ENCODE measurements at regions of chr6 and their contacts with region 1.

Region 1: DNA sequence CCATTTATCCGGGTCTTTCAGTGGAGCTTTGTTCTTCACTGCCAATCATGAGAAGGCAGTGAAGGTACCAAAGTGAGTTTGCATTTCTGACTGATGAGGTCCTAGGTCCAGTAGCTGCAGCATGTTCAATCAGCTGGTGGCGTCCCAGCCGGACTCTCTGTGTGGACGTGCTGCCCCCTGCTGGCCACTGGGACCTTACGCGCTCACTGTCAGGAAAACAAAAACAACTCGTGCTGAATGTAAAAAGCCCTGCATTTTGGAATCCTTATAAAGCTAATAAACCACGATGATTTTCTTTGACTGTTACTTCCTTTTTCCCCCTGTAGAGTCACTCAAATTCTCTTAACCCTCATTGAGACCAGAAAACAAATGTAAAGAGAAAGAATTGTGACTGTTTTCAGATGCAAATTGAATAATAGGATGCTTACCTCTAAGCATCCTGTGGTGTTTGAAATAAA is 4.9 kb upstream of the CD24 start:
- DNase-seq: peak; percentile 84
- ATAC-seq: peak; percentile 80
- H3K4me3 Mint-ChIP-seq: no peak overlapping the region
- H3K27ac Mint-ChIP-seq: no peak overlapping the region
- H3K4me1 Mint-ChIP-seq: peaks cover 7% of the 10 kb centered on the region
- H3K27me3 Mint-ChIP-seq: peaks cover 26% of the 10 kb centered on the region

Region 2: GRCh38 chr6:106561686-106562405 is 417.6 kb before region 1 on chr6:
- CTCF ChIA-PET with region 1: interaction called, 14 read pairs
- POLR2A ChIA-PET with region 1: no interaction called
- DNase-seq: no peak
- ATAC-seq: no peak
- H3K4me3 Mint-ChIP-seq: no peak overlapping the region
- H3K27ac Mint-ChIP-seq: no peak overlapping the region
- H3K4me1 Mint-ChIP-seq: peaks cover 4% of the 10 kb centered on the region
- H3K27me3 Mint-ChIP-seq: no peaks in the 10 kb centered on the region

Region 3: DNA sequence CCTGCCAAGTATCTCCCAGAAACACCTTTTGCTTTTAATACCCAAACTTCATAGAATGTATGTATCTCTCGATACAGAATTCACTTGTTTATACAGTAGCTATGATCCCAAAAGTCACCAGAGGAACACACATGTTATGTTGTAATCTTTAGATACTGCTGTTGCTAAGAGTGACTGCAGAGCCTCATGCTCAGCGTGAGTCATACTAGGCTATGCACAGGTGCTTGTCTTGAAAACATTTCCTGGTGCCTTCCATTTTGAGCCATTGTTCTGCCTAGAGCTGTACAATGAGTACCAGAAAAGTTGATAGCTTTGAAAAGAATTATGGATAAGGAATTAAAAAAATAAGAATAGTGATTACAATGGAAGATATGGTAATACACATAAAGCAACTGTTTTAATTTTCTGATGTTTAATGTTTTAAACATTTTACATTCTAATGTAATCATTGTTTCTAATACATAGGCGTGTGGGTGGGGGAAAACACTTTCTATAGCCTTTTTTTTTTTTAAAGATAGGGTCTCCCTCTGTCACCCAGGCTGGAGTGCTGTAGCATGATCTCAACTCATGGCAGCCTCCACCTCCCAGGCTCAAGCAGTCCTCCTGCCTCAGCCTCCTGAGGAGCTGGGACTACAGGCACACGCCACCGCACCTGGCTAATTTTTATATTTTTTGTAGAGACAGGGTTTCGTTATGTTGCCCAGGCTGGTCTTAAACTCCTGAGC is 84.3 kb before region 1 on chr6:
- CTCF ChIA-PET with region 1: no interaction called
- POLR2A ChIA-PET with region 1: no interaction called
- DNase-seq: no peak
- ATAC-seq: no peak
- H3K4me3 Mint-ChIP-seq: no peak overlapping the region
- H3K27ac Mint-ChIP-seq: no peak overlapping the region
- H3K4me1 Mint-ChIP-seq: no peaks in the 10 kb centered on the region
- H3K27me3 Mint-ChIP-seq: peaks cover 12% of the 10 kb centered on the region

Measured in activated CD8-positive, alpha-beta T cell treated with anti-CD3 and anti-CD28 coated beads, Interleukin-2, amount 10 ng/mL, durations not matched to agents 7 days and 5 days (primary cell).